ENCODE measurements at regions of chr2 and their contacts with region 1.

Region 1: DNA sequence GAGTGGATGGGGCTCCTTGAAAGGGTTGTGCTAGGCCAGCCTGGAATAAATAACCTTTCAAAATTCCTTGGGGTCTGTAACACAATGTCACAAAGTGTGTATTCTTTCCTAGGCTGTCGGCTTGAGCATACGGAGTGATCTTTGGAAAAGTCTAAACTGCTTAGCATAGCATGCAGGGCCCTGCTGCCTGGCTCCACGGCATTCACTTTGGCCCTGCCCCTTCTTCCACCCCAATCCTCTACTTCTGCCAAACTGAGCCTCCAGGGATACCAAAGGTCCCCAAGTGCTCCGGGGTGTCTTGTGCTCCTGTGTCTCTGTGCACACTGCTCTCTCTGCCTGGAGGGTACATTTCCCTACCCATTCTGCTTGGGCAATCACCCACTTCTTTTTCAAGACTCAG is 196.1 kb downstream of the LTBP1 start:
- DNase-seq: no peak
- ATAC-seq: peak in 1 of 4 donors; percentile 23
- H3K4me3 ChIP-seq: no peak overlapping the region
- H3K27ac ChIP-seq: no peak overlapping the region
- H3K4me1 ChIP-seq: peaks cover 25% of the 10 kb centered on the region
- H3K27me3 ChIP-seq: no peaks in the 10 kb centered on the region
- CTCF ChIP-seq: no peak

Region 2: GRCh38 chr2:33267756-33268155 is 124.9 kb after region 1 on chr2:
- intact Hi-C with region 1: loop called in 1 of 2 experiments (anchors 5 kb)
- DNase-seq: no peak
- ATAC-seq: no peak
- H3K4me3 ChIP-seq: no peak overlapping the region
- H3K27ac ChIP-seq: no peak overlapping the region
- H3K4me1 ChIP-seq: peaks cover 11% of the 10 kb centered on the region
- H3K27me3 ChIP-seq: no peaks in the 10 kb centered on the region
- CTCF ChIP-seq: no peak